ENCODE measurements at regions of chr6 and their contacts with region 1.

Region 1: GRCh38 chr6:149028767-149029405 is 282.1 kb downstream of the UST start:
- DNase-seq: peak; percentile 87
- ATAC-seq: peak; percentile 62
- H3K4me3 Mint-ChIP-seq: no peak overlapping the region
- H3K27ac Mint-ChIP-seq: no peak overlapping the region
- H3K4me1 Mint-ChIP-seq: peaks cover 53% of the 10 kb centered on the region
- H3K27me3 Mint-ChIP-seq: no peaks in the 10 kb centered on the region

Region 2: GRCh38 chr6:148342357-148343046 is 686.4 kb before region 1 on chr6 and contains the start of gene SASH1:
- CTCF ChIA-PET with region 1: no interaction called
- POLR2A ChIA-PET with region 1: no interaction called
- DNase-seq: peak; percentile 34
- ATAC-seq: peak; percentile 58
- H3K4me3 Mint-ChIP-seq: peak within 1 kb of the TSS; percentile 60
- H3K27ac Mint-ChIP-seq: peak within 1 kb of the TSS; percentile 46
- H3K4me1 Mint-ChIP-seq: peaks cover 9% of the 10 kb centered on the region
- H3K27me3 Mint-ChIP-seq: peaks cover 32% of the 10 kb centered on the region
- total RNA-seq, gene SASH1: not detected

Region 3: DNA sequence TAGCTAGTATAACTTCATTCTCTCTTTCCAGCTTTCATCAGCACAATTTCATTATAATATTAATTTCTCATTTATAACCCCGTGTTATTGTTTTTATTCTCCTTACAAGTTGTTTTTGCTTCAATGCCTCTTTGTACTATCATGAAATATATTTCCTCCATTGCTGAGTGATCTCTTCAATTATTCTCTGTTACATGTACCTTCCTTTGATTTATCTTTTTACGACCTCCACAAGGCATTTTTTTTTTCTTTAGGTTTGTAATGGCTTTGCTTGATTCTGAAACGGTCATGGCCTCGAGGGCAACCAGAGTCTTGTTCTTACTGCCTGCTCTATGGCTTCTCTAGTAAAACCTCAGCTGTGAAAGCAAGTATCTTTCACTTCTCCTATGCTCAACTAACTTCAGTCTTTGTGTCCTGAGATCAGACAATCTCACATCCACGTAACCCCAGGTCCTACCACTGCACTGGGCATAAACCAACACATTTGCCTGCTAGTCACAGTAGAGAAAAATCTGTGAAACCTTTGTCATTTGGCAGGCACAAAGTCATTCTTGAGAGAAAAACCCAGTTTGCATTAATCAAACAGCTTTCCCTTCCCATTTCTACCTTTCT is 162.1 kb before region 1 on chr6:
- CTCF ChIA-PET with region 1: no interaction called
- POLR2A ChIA-PET with region 1: no interaction called
- DNase-seq: no peak
- ATAC-seq: no peak
- H3K4me3 Mint-ChIP-seq: no peak overlapping the region
- H3K27ac Mint-ChIP-seq: no peak overlapping the region
- H3K4me1 Mint-ChIP-seq: no peaks in the 10 kb centered on the region
- H3K27me3 Mint-ChIP-seq: peaks cover 6% of the 10 kb centered on the region

Region 4: DNA sequence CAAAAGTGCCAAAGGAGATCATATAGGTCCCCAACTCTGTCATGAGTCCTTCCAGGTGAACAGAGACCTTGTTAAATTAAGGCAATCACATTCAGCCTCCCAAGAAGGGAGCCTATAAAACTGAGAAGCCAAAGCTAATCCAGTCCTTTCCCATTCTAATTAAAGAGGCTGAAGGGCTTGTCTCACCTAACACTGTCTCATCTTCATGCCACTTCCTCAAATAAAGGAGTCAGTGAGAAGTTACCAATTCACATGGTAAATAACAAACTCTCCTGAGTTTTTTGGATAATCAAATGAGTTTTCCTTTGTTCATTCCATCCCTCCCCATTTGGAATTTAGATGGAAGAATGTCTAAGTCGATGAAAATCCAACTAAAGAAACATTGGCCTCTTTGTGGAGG is 39.3 kb before region 1 on chr6:
- CTCF ChIA-PET with region 1: no interaction called
- POLR2A ChIA-PET with region 1: no interaction called
- DNase-seq: no peak
- ATAC-seq: no peak
- H3K4me3 Mint-ChIP-seq: no peak overlapping the region
- H3K27ac Mint-ChIP-seq: no peak overlapping the region
- H3K4me1 Mint-ChIP-seq: no peaks in the 10 kb centered on the region
- H3K27me3 Mint-ChIP-seq: peaks cover 16% of the 10 kb centered on the region

Region 5: GRCh38 chr6:149043476-149044130 is 14.7 kb after region 1 on chr6:
- CTCF ChIA-PET with region 1: interaction called, 50 read pairs
- POLR2A ChIA-PET with region 1: interaction called, 6 read pairs
- DNase-seq: peak; percentile 52
- ATAC-seq: no peak
- H3K4me3 Mint-ChIP-seq: no peak overlapping the region
- H3K27ac Mint-ChIP-seq: no peak overlapping the region
- H3K4me1 Mint-ChIP-seq: peaks cover 52% of the 10 kb centered on the region
- H3K27me3 Mint-ChIP-seq: no peaks in the 10 kb centered on the region

Region 6: GRCh38 chr6:149065658-149066556 is 37.0 kb after region 1 on chr6:
- CTCF ChIA-PET with region 1: interaction called, 11 read pairs
- POLR2A ChIA-PET with region 1: interaction called, 6 read pairs
- DNase-seq: peak; percentile 66
- ATAC-seq: peak; percentile 92
- H3K4me3 Mint-ChIP-seq: peak overlapping the region; percentile 6
- H3K27ac Mint-ChIP-seq: peak overlapping the region; percentile 90
- H3K4me1 Mint-ChIP-seq: peaks cover 40% of the 10 kb centered on the region
- H3K27me3 Mint-ChIP-seq: no peaks in the 10 kb centered on the region

Region 7: DNA sequence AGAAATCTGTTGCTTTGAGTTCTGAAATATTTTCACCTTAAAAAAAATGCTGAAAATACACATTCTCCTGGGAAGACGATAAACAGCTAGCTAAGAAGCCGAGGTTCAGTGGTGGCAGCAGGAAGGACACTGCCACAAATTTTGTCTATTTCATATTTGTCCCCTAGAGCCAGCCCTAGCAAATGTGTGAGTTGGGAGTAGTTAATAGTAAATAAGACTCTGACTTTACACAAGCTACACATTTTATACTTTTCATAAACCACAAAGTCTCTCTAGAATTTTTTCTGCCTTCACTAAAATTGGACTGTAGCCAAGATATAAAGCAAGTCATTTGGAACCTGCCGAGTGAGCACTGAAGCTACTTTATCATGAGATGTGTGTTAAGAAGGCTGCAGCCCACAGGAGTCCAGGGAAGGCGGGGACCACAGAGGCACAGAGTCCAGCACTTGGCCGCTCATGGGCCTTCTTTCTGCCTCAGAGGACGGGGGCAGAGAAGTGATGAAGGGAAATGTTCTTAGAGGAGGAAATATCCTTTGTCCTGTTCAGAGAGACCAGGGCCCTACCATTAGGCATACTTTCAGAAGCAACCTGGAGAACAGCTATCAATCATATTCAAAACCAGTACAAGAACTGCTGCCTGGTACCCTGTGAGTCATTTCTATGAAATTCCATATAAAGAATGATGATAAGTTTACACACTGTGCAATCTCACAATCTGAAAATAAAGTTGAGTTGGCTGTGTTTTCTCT is 46.9 kb after region 1 on chr6:
- CTCF ChIA-PET with region 1: interaction called, 19 read pairs
- POLR2A ChIA-PET with region 1: interaction called, 6 read pairs
- DNase-seq: no peak
- ATAC-seq: no peak
- H3K4me3 Mint-ChIP-seq: no peak overlapping the region
- H3K27ac Mint-ChIP-seq: no peak overlapping the region
- H3K4me1 Mint-ChIP-seq: peaks cover 31% of the 10 kb centered on the region
- H3K27me3 Mint-ChIP-seq: no peaks in the 10 kb centered on the region

Region 8: GRCh38 chr6:149129371-149130077 is 100.6 kb after region 1 on chr6:
- CTCF ChIA-PET with region 1: no interaction called
- POLR2A ChIA-PET with region 1: no interaction called
- DNase-seq: peak; percentile 20
- ATAC-seq: no peak
- H3K4me3 Mint-ChIP-seq: no peak overlapping the region
- H3K27ac Mint-ChIP-seq: peak overlapping the region; percentile 83
- H3K4me1 Mint-ChIP-seq: peaks cover 61% of the 10 kb centered on the region
- H3K27me3 Mint-ChIP-seq: no peaks in the 10 kb centered on the region

Region 9: DNA sequence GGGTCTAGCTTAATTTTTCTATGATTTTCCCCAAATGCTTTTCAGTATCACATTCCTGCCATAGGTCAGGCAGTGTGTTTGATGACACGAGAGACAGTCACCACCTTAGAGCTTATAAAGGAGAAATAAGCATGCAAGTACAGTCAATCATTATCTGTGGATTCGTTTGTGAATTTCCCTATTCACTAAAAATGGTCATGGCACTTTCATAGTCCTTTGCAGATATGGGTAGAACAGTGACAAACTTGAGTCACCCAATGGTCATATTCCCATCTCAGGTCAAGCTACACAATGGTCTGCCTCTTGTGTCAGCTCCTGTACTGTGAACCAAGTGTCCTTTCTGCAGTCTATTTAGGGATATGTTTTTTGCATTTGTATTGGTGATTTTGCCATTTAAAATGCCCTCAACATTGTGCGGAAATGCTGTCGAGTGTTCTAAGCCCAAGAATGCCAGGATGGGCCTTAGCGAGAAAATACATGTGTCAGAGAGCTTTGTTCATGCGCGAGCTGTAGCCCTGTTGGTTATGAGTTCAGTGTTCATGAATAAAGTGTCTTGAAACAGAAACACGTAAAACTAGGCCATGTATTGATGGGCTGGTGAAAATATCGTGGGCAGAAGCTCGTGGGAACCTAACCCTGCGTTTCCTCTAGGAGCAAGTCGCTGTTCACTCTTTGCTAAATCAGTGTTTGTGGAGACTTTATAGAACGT is 391.0 kb after region 1 on chr6:
- CTCF ChIA-PET with region 1: interaction called, 10 read pairs
- POLR2A ChIA-PET with region 1: no interaction called
- DNase-seq: no peak
- ATAC-seq: no peak
- H3K4me3 Mint-ChIP-seq: no peak overlapping the region
- H3K27ac Mint-ChIP-seq: no peak overlapping the region
- H3K4me1 Mint-ChIP-seq: peaks cover 4% of the 10 kb centered on the region
- H3K27me3 Mint-ChIP-seq: no peaks in the 10 kb centered on the region